ENCODE measurements at regions of chr7 and their contacts with region 1.

Region 1: DNA sequence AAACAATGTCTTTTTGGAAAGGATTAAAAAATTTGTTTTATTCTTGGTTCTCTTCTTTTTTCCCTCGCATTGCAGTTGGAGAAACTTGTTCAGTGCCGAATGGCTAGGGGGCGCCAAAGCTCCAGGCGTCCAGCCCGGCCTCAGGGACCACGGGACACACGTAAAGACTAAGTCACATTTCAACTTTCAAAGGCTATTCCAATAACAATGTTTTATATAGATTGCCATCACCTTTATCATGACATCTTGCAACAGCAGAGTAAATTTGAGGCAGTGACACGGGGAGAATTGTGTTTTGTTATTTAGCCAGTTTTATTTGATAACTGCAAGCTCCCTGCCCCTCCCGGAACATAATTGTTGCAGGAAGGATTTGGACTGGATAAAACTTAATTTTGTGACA is 2.2 kb upstream of the IGFBP3 start:
- DNase-seq: no peak
- ATAC-seq: peak; percentile 81
- H3K4me3 ChIP-seq: peak overlapping the region; percentile 30 to 46
- H3K27ac ChIP-seq: no peak overlapping the region
- H3K4me1 ChIP-seq: peaks cover 14% of the 10 kb centered on the region; the same call in 1 of the 2 replicates
- H3K27me3 ChIP-seq: peaks cover 9% of the 10 kb centered on the region
- CTCF ChIP-seq: peak; percentile 99

Region 2: GRCh38 chr7:46131916-46132795 is 208.9 kb after region 1 on chr7:
- CTCF ChIA-PET with region 1: no interaction called
- POLR2A ChIA-PET with region 1: no interaction called
- in situ Hi-C with region 1: no loop called
- intact Hi-C with region 1: loop called (anchors 5 kb)
- DNase-seq: no peak
- ATAC-seq: peak; percentile 73; the same call in 1 of the 2 replicates
- H3K4me3 ChIP-seq: no peak overlapping the region
- H3K27ac ChIP-seq: no peak overlapping the region
- H3K4me1 ChIP-seq: no peaks in the 10 kb centered on the region
- H3K27me3 ChIP-seq: no peaks in the 10 kb centered on the region
- CTCF ChIP-seq: peak; percentile 24

Region 3: DNA sequence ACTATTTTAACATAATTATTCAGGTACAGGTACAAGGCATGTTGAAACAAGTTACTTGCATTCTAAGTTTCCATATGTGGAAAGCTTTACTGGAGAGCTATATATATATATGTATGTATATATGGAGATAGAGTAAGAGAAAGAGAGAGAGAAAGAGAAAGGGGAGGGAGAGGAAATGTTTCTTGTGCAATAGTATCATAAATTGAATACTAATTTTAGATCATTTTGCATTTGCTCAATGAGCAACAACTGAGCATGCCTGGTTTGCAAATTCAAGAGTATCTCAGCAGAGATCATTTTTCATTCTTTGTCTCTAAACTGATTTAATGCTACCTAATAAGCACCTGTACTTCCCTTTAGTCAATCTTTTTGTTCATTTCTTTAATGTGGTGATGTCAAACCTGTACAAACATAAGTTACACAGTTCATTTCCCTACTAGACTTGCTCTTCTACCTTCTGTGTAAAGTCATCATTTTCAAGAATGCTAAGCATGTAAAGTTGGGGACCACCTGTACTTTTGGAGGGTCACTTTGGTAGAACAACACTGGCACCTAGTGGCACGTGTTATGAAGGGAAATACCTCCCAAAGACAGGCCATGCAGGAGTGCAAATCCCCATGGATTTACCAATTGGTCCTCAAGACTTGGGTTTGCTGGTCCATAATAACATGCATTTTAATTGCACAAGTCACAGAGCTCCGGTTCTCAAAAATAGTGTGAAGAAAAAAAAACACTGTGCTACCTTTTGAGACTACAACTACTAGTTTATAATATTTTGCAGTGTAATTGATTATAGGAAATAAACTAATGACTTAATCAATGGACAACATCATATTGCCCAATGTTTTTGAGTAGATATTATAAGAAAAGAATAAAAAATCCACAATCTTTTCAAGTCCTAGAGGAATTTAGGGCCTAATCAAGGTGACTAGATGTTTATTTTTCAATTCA is 429.0 kb after region 1 on chr7:
- CTCF ChIA-PET with region 1: interaction called, 3 read pairs
- POLR2A ChIA-PET with region 1: no interaction called
- in situ Hi-C with region 1: no loop called
- intact Hi-C with region 1: loop called (anchors 1 kb)
- DNase-seq: peak; percentile 43
- ATAC-seq: peak; percentile 93
- H3K4me3 ChIP-seq: no peak overlapping the region
- H3K27ac ChIP-seq: no peak overlapping the region
- H3K4me1 ChIP-seq: no peaks in the 10 kb centered on the region
- H3K27me3 ChIP-seq: no peaks in the 10 kb centered on the region
- CTCF ChIP-seq: peak; percentile 75

Region 4: GRCh38 chr7:46494026-46494425 is 570.7 kb after region 1 on chr7:
- CTCF ChIA-PET with region 1: no interaction called
- POLR2A ChIA-PET with region 1: no interaction called
- in situ Hi-C with region 1: no loop called
- intact Hi-C with region 1: loop called (anchors 10 kb)
- DNase-seq: no peak
- ATAC-seq: no peak
- H3K4me3 ChIP-seq: no peak overlapping the region
- H3K27ac ChIP-seq: no peak overlapping the region
- H3K4me1 ChIP-seq: no peaks in the 10 kb centered on the region
- H3K27me3 ChIP-seq: no peaks in the 10 kb centered on the region
- CTCF ChIP-seq: no peak

Region 5: GRCh38 chr7:47080816-47081215 is 1157.5 kb after region 1 on chr7:
- CTCF ChIA-PET with region 1: no interaction called
- POLR2A ChIA-PET with region 1: no interaction called
- in situ Hi-C with region 1: no loop called
- intact Hi-C with region 1: loop called (anchors 5 kb)
- DNase-seq: no peak
- ATAC-seq: no peak
- H3K4me3 ChIP-seq: no peak overlapping the region
- H3K27ac ChIP-seq: no peak overlapping the region
- H3K4me1 ChIP-seq: no peaks in the 10 kb centered on the region
- H3K27me3 ChIP-seq: no peaks in the 10 kb centered on the region
- CTCF ChIP-seq: no peak